Mammary epithelial cell (primary cell): ENCODE measurements at regions of chr1 and their contacts with region 1.

Region 1: GRCh38 chr1:17587989-17588685 is 48.6 kb downstream of the ARHGEF10L start:
- DNase-seq: peak; percentile 66
- H3K4me3 ChIP-seq: no peak overlapping the region
- H3K27ac ChIP-seq: no peak overlapping the region
- H3K4me1 ChIP-seq: peaks cover 28% of the 10 kb centered on the region
- H3K27me3 ChIP-seq: no peaks in the 10 kb centered on the region
- CTCF ChIP-seq: no peak

Region 2: GRCh38 chr1:17520071-17520813 is 67.9 kb before region 1 on chr1:
- CTCF ChIA-PET with region 1: no interaction called
- dilution Hi-C with region 1: no loop called
- in situ Hi-C with region 1: no loop called
- intact Hi-C with region 1: loop called (anchors 5 kb)
- DNase-seq: peak; percentile 90
- H3K4me3 ChIP-seq: no peak overlapping the region
- H3K27ac ChIP-seq: no peak overlapping the region
- H3K4me1 ChIP-seq: peaks cover 12% of the 10 kb centered on the region
- H3K27me3 ChIP-seq: no peaks in the 10 kb centered on the region
- CTCF ChIP-seq: no peak

Region 3: GRCh38 chr1:17696417-17697301 is 108.5 kb after region 1 on chr1:
- CTCF ChIA-PET with region 1: no interaction called
- dilution Hi-C with region 1: no loop called
- in situ Hi-C with region 1: no loop called
- intact Hi-C with region 1: no loop called
- DNase-seq: peak; percentile 27
- H3K4me3 ChIP-seq: no peak overlapping the region
- H3K27ac ChIP-seq: no peak overlapping the region
- H3K4me1 ChIP-seq: no peaks in the 10 kb centered on the region
- H3K27me3 ChIP-seq: no peaks in the 10 kb centered on the region
- CTCF ChIP-seq: peak; percentile 12 to 46